ENCODE measurements at regions of chr15 and their contacts with region 1.

Region 1: GRCh38 chr15:32994810-32995424 is 199.6 kb downstream of the FMN1 start:
- DNase-seq: no peak
- ATAC-seq: peak in 1 of 8 donors; percentile 25
- H3K4me3 ChIP-seq: no peak overlapping the region
- H3K27ac ChIP-seq: no peak overlapping the region
- H3K4me1 ChIP-seq: no peaks in the 10 kb centered on the region
- H3K27me3 ChIP-seq: no peaks in the 10 kb centered on the region
- CTCF ChIP-seq: peak; percentile 27 to 66 (median 54)

Region 2: DNA sequence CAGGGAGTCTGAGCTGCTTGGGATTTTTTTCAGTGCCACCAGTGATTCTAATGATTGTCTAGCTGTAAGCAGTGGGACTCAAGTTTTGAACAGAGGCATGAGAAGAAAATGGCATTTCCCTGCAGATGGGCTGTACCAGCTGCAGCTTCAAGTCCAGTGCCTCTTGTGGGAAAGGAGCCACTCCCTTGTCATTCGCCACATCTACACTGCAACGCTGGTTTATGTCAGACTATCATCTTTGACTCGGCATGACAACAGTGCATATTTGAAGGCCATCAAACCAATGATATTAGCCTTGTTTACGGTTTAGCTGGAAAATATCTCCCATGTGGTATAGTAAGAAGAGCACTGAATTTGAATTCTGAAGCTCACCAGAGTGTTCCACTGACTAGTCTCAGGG is 331.2 kb before region 1 on chr15:
- intact Hi-C with region 1: loop called (anchors 2 to 10 kb)
- DNase-seq: no peak
- ATAC-seq: no peak
- H3K4me3 ChIP-seq: no peak overlapping the region
- H3K27ac ChIP-seq: no peak overlapping the region
- H3K4me1 ChIP-seq: peaks cover 0 to 4% (median 0%) of the 10 kb centered on the region in 9 donors
- H3K27me3 ChIP-seq: no peaks in the 10 kb centered on the region
- CTCF ChIP-seq: no peak

Region 3: GRCh38 chr15:32838820-32839219 is 156.1 kb before region 1 on chr15:
- intact Hi-C with region 1: loop called in 4 of 10 experiments (anchors 10 kb)
- DNase-seq: no peak
- ATAC-seq: peak in 1 of 8 donors; percentile 41
- H3K4me3 ChIP-seq: no peak overlapping the region
- H3K27ac ChIP-seq: no peak overlapping the region
- H3K4me1 ChIP-seq: no peaks in the 10 kb centered on the region
- H3K27me3 ChIP-seq: peaks cover 0 to 16% (median 0%) of the 10 kb centered on the region in 7 donors
- CTCF ChIP-seq: no peak

Region 4: GRCh38 chr15:32844118-32844711 is 150.7 kb before region 1 on chr15:
- intact Hi-C with region 1: loop called in 4 of 10 experiments (anchors 10 kb)
- DNase-seq: no peak
- ATAC-seq: no peak
- H3K4me3 ChIP-seq: no peak overlapping the region
- H3K27ac ChIP-seq: no peak overlapping the region
- H3K4me1 ChIP-seq: no peaks in the 10 kb centered on the region
- H3K27me3 ChIP-seq: peaks cover 0 to 8% (median 0%) of the 10 kb centered on the region in 7 donors
- CTCF ChIP-seq: peak in 8 of 9 donors; percentile 19 to 64 (median 53)

Region 5: GRCh38 chr15:32855942-32856341 is 139.0 kb before region 1 on chr15:
- intact Hi-C with region 1: loop called in 1 of 10 experiments (anchors 10 kb)
- DNase-seq: peak in 1 of 2 donors; percentile 7
- ATAC-seq: peak; percentile 49 to 95 (median 84)
- H3K4me3 ChIP-seq: no peak overlapping the region
- H3K27ac ChIP-seq: peak overlapping the region in 4 of 10 donors; percentile 1 to 57 (median 48)
- H3K4me1 ChIP-seq: peaks cover 0 to 9% (median 0%) of the 10 kb centered on the region in 9 donors
- H3K27me3 ChIP-seq: no peaks in the 10 kb centered on the region
- CTCF ChIP-seq: no peak

Region 6: GRCh38 chr15:32952901-32953532 is 41.9 kb before region 1 on chr15:
- intact Hi-C with region 1: no loop called
- DNase-seq: no peak
- ATAC-seq: peak in 3 of 8 donors; percentile 43 to 63 (median 47)
- H3K4me3 ChIP-seq: no peak overlapping the region
- H3K27ac ChIP-seq: no peak overlapping the region
- H3K4me1 ChIP-seq: peaks cover 0 to 8% (median 0%) of the 10 kb centered on the region in 9 donors
- H3K27me3 ChIP-seq: no peaks in the 10 kb centered on the region
- CTCF ChIP-seq: no peak

Measured in heart right ventricle (tissue), 16 donors.